Prostate gland (tissue), 2 donors: ENCODE measurements at regions of chr14 and their contacts with region 1.

Region 1: DNA sequence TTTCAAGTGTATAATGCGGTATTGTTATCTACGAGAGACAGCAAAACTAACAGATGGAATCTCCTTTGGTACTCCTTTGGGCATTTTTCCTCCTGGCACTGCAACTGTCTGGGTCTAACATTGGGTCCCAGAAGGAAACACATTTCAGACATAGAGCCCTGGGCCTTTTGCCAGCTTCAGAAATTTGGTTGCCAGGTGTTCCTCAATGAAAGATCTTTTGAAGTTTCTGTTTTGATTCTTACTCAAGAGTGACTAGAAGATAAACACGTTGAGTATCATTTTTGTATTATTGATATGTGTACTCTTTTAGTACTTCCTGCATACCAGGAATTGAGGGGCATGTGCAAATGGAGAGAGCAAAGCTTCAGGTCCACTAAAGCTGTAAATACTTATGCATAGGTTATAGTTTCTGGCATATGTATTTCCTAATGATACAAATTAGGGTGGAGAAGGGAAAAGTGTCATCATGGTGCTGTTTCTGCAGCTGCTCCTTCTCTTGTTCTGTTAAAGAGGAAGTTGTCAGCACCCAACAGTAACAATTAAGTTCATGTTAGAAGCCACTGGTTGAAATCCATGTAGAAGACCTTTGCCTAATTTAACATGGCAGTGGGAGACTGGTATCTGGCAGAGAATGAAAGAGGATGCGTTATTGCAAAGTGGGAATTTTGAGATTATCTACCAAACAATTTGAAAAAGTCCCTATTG is 53.5 kb downstream of the SLC38A6 start:
- DNase-seq: peak; percentile 6
- H3K4me3 ChIP-seq: no peak overlapping the region
- H3K27ac ChIP-seq: no peak overlapping the region
- H3K4me1 ChIP-seq: no peaks in the 10 kb centered on the region
- H3K27me3 ChIP-seq: no peaks in the 10 kb centered on the region
- CTCF ChIP-seq: no peak
- POLR2A ChIP-seq: no peak

Region 2: DNA sequence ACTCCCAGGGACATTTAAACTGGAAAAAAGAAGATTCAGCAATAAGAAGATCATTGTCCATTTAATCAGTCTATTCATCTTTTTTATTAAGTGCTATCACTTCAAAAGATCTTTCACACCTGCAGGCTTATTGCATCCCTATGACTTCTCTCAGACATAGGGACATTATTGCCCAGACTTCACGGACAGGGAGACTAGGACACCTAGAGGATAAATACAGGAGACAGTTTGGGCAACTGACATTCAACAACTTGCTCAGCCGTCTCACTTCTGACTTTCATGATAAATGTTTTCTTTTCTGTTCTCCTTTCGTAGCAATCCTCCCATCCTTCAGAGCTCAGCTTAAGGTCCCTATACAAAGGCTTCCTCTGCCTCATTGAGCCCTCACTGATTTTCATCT is 162.2 kb after region 1 on chr14:
- intact Hi-C with region 1: loop called (anchors 10 kb)
- DNase-seq: no peak
- H3K4me3 ChIP-seq: no peak overlapping the region
- H3K27ac ChIP-seq: no peak overlapping the region
- H3K4me1 ChIP-seq: no peaks in the 10 kb centered on the region
- H3K27me3 ChIP-seq: no peaks in the 10 kb centered on the region
- CTCF ChIP-seq: peak in 1 of 4 experiments; percentile 12
- POLR2A ChIP-seq: no peak